PC-9 (cell line): ENCODE measurements at regions of chr3 and their contacts with region 1.

Region 1: DNA sequence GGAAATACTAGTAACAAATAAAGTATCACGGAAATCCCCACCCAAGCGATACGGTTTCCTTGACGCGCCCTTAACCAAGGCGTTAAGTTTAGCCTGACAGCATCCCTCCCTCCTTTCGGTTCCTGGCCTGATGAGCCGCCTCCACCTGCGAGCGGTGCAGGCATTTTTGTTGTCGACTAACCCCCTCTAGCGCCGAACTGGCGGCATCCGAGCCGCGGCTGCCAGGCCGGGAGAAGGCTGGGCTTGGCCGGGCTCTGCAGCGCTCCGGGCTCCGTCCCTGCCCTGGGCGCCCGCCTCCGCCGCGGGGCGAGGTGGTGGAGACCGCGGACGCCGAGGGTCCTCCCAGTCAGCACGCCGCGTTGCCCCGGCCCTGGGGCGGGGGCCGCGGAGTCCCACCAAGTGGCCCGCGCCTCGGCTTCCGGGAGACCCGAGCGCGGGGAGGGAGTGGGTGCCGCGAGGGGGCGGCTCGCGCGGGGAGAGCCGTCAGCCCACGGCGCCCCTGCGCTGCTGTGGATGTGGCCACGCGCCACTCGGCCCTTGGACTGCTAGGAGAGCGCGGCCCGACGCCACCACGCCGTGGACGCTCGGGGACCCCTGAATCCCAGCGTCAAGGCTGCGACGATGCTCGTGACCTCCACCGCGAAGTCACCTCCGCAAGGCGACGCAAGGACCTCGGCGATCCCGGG is 1.1 kb upstream of the EPHA6 start:
- DNase-seq: peak; percentile 70 to 87
- H3K4me3 ChIP-seq: peak overlapping the region; percentile 62
- H3K27ac ChIP-seq: no peak overlapping the region
- H3K4me1 ChIP-seq: peaks cover 16% of the 10 kb centered on the region
- H3K27me3 ChIP-seq: peaks cover 32% of the 10 kb centered on the region
- CTCF ChIP-seq: peak; percentile 83

Region 2: GRCh38 chr3:95514260-95514659 is 1299.0 kb before region 1 on chr3:
- CTCF ChIA-PET with region 1: no interaction called
- POLR2A ChIA-PET with region 1: interaction called, 16 read pairs
- intact Hi-C with region 1: no loop called
- DNase-seq: no peak
- H3K4me3 ChIP-seq: no peak overlapping the region
- H3K27ac ChIP-seq: no peak overlapping the region
- H3K4me1 ChIP-seq: no peaks in the 10 kb centered on the region
- H3K27me3 ChIP-seq: no peaks in the 10 kb centered on the region
- CTCF ChIP-seq: no peak

Region 3: GRCh38 chr3:96331341-96331740 is 481.9 kb before region 1 on chr3:
- CTCF ChIA-PET with region 1: no interaction called
- POLR2A ChIA-PET with region 1: no interaction called
- intact Hi-C with region 1: loop called (anchors 2 kb)
- DNase-seq: no peak
- H3K4me3 ChIP-seq: no peak overlapping the region
- H3K27ac ChIP-seq: no peak overlapping the region
- H3K4me1 ChIP-seq: no peaks in the 10 kb centered on the region
- H3K27me3 ChIP-seq: no peaks in the 10 kb centered on the region
- CTCF ChIP-seq: peak; percentile 51

Region 4: GRCh38 chr3:96646596-96646995 is 166.7 kb before region 1 on chr3:
- CTCF ChIA-PET with region 1: no interaction called
- POLR2A ChIA-PET with region 1: no interaction called
- intact Hi-C with region 1: no loop called
- DNase-seq: no peak
- H3K4me3 ChIP-seq: no peak overlapping the region
- H3K27ac ChIP-seq: no peak overlapping the region
- H3K4me1 ChIP-seq: no peaks in the 10 kb centered on the region
- H3K27me3 ChIP-seq: no peaks in the 10 kb centered on the region
- CTCF ChIP-seq: no peak

Region 5: GRCh38 chr3:96779810-96780209 is 33.5 kb before region 1 on chr3:
- CTCF ChIA-PET with region 1: no interaction called
- POLR2A ChIA-PET with region 1: no interaction called
- intact Hi-C with region 1: loop called (anchors 1 kb)
- DNase-seq: no peak
- H3K4me3 ChIP-seq: no peak overlapping the region
- H3K27ac ChIP-seq: no peak overlapping the region
- H3K4me1 ChIP-seq: no peaks in the 10 kb centered on the region
- H3K27me3 ChIP-seq: no peaks in the 10 kb centered on the region
- CTCF ChIP-seq: peak; percentile 45; the same call in 1 of the 2 replicates

Region 6: DNA sequence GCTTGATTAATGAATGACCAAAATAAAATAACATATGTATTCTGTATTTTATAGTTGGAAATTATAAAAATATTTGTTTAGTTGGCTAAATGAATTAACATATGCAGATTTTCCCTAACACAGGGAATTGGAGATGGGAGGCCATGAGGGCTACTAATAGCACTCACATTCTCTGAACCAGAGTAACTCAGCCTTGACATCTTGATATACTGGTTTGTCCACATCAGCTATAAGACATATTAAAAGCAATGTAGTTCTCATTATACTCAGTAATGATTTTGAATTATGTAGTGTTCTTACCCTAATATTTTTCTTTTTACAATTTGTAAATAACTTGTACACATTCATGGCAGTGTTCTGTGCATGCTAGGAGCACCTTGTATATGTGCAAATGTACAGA is 257.0 kb after region 1 on chr3:
- CTCF ChIA-PET with region 1: no interaction called
- POLR2A ChIA-PET with region 1: no interaction called
- intact Hi-C with region 1: no loop called
- DNase-seq: no peak
- H3K4me3 ChIP-seq: no peak overlapping the region
- H3K27ac ChIP-seq: no peak overlapping the region
- H3K4me1 ChIP-seq: no peaks in the 10 kb centered on the region
- H3K27me3 ChIP-seq: no peaks in the 10 kb centered on the region
- CTCF ChIP-seq: no peak

Region 7: DNA sequence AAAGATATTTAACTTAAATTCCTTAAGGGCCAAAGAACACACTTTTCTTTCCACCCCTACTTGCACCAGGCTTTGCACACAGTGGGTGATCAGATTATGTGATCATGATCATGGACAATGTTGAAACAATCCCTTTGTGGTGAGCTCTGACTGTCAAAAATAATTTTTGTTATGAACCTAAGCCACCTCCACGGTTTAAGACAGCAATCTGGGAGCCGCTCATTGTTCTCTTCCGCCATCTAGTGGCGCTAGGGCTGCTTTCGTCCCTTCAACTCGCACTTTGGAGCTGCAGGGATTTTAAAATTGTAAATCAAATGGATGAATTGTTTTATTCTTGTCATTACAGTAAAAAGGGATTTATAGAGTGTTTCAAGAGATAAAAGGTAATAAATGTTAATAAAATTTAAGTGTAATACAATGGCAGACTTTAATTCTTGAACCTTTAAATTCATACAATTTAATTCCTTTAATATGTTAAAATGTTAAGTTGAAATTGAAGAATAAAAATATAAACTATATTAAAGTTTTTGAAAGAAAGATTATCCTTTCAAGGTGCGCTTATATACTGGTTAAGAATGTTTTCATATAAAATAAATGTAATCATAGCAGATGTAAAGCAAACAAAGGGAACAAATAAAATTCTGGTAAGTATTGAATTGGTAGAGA is 906.0 kb after region 1 on chr3:
- CTCF ChIA-PET with region 1: no interaction called
- POLR2A ChIA-PET with region 1: no interaction called
- intact Hi-C with region 1: loop called (anchors 2 kb)
- DNase-seq: peak; percentile 71 to 79
- H3K4me3 ChIP-seq: peak overlapping the region; percentile 25; the same call in 1 of the 2 replicates
- H3K27ac ChIP-seq: no peak overlapping the region
- H3K4me1 ChIP-seq: no peaks in the 10 kb centered on the region
- H3K27me3 ChIP-seq: no peaks in the 10 kb centered on the region
- CTCF ChIP-seq: peak; percentile 99